PC-9 (cell line): ENCODE measurements at regions of chr20 and their contacts with region 1.

Region 1: DNA sequence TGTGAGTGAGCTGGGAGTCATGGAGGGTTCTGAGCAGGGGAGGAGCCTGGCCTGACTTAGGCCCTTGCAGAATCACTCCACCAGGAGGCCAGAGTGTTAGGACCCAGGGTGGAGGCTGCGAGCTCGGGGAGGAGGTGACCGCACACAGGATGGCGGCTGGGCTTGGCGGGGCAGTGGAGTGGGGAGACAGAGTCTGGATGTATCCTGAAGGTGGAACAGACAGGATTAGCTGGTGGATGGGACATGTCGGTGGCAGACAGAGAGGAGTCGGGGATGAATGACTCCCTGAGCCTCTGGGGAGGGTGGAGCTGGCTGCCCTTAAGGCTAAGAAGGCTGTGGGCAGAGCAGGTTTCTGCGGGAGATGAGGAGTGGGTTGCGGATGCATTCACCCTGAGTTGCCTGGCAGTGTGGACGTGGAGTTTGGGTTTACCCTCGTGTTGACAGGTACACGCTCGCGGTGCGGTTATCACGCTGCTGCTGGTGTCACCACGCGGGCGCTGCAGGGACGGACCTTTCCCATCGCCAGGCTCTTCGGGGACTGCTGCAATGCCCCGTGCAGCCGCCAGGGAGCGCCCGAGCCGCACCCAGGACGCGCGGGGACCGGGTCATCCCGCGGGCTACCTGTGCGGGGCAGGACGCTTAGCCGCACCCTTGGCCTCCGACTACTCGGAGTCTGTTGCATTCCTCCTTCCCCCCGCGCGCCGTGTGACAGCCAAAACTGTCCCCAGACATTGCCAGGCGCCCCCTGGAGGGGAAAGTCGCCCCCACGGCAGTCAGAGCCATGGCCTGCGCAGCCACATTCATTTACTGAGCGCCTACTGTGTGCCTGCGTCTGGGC is 43.0 kb upstream of the PTGIS start:
- DNase-seq: peak; percentile 80 to 94
- H3K4me3 ChIP-seq: no peak overlapping the region
- H3K27ac ChIP-seq: peak overlapping the region; percentile 18; the same call in 1 of the 2 replicates
- H3K4me1 ChIP-seq: peaks cover 74% of the 10 kb centered on the region
- H3K27me3 ChIP-seq: no peaks in the 10 kb centered on the region
- CTCF ChIP-seq: peak; percentile 99

Region 2: GRCh38 chr20:49338061-49338460 is 272.9 kb before region 1 on chr20:
- CTCF ChIA-PET with region 1: no interaction called
- POLR2A ChIA-PET with region 1: no interaction called
- intact Hi-C with region 1: loop called (anchors 1 kb)
- DNase-seq: no peak
- H3K4me3 ChIP-seq: no peak overlapping the region
- H3K27ac ChIP-seq: no peak overlapping the region
- H3K4me1 ChIP-seq: 0 out of 2 replicates have a peak, but pooled peaks cover 3% of the 10 kb centered on the region
- H3K27me3 ChIP-seq: peaks cover 4% of the 10 kb centered on the region; the same call in 1 of the 2 replicates
- CTCF ChIP-seq: no peak

Region 3: DNA sequence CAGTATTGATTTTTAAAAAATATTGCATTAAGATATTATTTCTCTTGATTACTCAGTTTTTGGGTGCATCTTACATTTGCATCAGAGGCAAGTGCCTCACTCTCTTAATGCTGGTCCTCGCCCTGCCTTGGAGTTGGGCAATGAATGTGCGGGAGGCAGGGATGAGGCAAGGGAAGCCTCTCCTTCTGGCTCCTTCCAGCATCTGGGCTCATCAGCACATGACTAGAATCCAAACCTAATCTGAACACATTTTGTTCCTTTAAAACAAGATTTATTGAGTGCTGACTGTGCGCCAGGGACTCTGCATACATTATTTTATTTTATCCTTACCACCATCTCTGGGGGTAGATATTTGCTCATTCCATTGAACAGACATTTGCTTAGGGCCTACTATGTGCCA is 261.2 kb before region 1 on chr20:
- CTCF ChIA-PET with region 1: no interaction called
- POLR2A ChIA-PET with region 1: no interaction called
- intact Hi-C with region 1: no loop called
- DNase-seq: no peak
- H3K4me3 ChIP-seq: no peak overlapping the region
- H3K27ac ChIP-seq: no peak overlapping the region
- H3K4me1 ChIP-seq: peaks cover 24% of the 10 kb centered on the region
- H3K27me3 ChIP-seq: no peaks in the 10 kb centered on the region
- CTCF ChIP-seq: no peak

Region 4: GRCh38 chr20:49676581-49677291 is 65.8 kb after region 1 on chr20:
- CTCF ChIA-PET with region 1: no interaction called
- POLR2A ChIA-PET with region 1: interaction called, 3 read pairs
- intact Hi-C with region 1: loop called (anchors 5 kb)
- DNase-seq: peak in 1 of 2 experiments; percentile 76
- H3K4me3 ChIP-seq: peak overlapping the region; percentile 11; the same call in 1 of the 2 replicates
- H3K27ac ChIP-seq: peak overlapping the region; percentile 91
- H3K4me1 ChIP-seq: peaks cover 100% of the 10 kb centered on the region
- H3K27me3 ChIP-seq: no peaks in the 10 kb centered on the region
- CTCF ChIP-seq: no peak

Region 5: GRCh38 chr20:49775229-49775693 is 164.3 kb after region 1 on chr20:
- CTCF ChIA-PET with region 1: interaction called, 3 read pairs
- POLR2A ChIA-PET with region 1: interaction called, 5 read pairs
- intact Hi-C with region 1: loop called (anchors 1 kb)
- DNase-seq: peak; percentile 87 to 100
- H3K4me3 ChIP-seq: peak overlapping the region; percentile 52
- H3K27ac ChIP-seq: peak overlapping the region; percentile 96
- H3K4me1 ChIP-seq: peaks cover 67% of the 10 kb centered on the region
- H3K27me3 ChIP-seq: no peaks in the 10 kb centered on the region
- CTCF ChIP-seq: no peak

Region 6: DNA sequence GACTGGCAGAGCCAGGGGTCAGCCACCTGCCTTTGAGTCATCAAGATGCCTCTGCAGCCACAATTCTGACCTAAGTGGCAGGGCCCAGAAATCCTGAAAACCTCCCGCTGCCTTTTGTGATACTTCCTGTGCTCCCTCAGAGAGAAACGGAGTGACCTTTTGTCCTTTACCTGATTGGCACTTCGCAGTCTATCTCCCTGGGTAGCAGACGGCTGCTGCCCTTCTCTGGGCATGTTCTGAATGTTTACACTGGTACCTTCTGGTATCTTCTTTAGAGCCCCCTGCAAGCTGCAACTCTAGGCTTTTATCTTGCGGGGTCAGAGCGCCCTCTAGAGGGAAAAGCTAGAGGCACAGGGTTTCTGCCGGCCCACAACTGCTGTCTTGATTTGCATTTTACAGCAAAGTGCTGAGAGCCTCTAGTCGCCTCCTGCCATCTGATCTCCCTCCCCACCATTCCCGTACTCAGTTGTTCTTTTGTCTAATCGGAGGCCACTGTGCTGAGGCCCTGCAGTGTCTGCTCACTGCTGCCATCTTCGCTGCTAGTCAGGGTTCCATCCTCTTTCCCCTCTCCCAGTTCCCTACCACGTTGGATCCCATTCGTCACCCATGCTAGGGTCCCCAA is 277.5 kb after region 1 on chr20:
- CTCF ChIA-PET with region 1: no interaction called
- POLR2A ChIA-PET with region 1: interaction called, 4 read pairs
- intact Hi-C with region 1: loop called (anchors 1 kb)
- DNase-seq: peak; percentile 79 to 89
- H3K4me3 ChIP-seq: no peak overlapping the region
- H3K27ac ChIP-seq: peak overlapping the region; percentile 49
- H3K4me1 ChIP-seq: peaks cover 44% of the 10 kb centered on the region
- H3K27me3 ChIP-seq: no peaks in the 10 kb centered on the region
- CTCF ChIP-seq: peak; percentile 99

Region 7: DNA sequence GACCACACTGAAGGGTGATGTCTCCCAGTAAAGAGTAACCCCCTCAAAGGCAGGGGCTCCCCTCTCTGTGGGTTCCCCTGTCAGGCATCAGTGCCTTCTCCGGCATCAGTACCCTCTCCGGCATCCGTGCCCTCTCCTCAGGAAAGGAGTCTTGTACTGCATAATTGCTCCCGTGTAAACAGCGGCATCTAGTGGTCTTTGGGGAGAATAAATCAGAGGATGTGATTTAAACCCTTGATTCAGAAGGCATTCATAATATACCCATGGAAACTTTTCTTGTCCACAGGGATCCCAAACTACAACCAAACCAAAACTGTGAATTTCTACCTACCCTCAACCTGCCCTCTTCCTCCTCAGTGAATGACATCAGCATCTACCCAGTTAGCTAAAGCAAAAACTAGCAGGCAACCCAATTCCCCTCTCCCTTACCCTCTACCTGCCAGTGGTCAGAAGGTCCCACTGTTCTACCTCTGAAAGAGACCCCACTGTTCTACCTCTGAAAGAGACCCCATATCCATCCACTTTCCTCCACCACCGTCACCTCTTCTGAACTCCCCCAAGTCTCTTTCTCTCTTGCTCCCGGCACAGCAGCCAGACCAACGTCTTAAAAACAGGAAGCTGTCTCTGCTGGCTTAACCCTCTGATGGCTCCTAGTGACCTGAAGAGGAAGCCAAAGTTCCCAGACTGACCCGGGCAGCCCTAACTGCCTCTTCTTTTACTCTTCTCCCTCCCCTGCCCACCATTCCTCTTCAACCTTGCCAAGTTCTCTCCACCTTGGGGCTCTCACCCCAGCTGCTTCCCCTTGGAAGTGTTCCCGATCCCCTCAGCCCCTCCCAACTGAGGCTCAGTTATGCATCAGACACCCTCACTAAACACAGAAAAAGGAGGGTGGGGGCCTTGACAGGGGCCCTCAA is 474.8 kb after region 1 on chr20:
- CTCF ChIA-PET with region 1: no interaction called
- POLR2A ChIA-PET with region 1: no interaction called
- intact Hi-C with region 1: loop called (anchors 5 kb)
- DNase-seq: peak; percentile 43 to 66
- H3K4me3 ChIP-seq: peak overlapping the region; percentile 24; the same call in 1 of the 2 replicates
- H3K27ac ChIP-seq: peak overlapping the region; percentile 81
- H3K4me1 ChIP-seq: peaks cover 41% of the 10 kb centered on the region
- H3K27me3 ChIP-seq: no peaks in the 10 kb centered on the region
- CTCF ChIP-seq: peak; percentile 92